CD8-positive, alpha-beta T cell (primary cell): ENCODE measurements at regions of chr9 and their contacts with region 1.

Region 1: GRCh38 chr9:133144137-133144903 is 19.4 kb downstream of the GBGT1 start:
- DNase-seq: peak; percentile 91 to 98 (median 95)
- ATAC-seq: peak; percentile 60
- H3K4me3 ChIP-seq: peak overlapping the region; percentile 41 to 49
- H3K4me3 Mint-ChIP-seq: peak overlapping the region; percentile 83
- H3K27ac ChIP-seq: peak overlapping the region; percentile 68 to 96
- H3K27ac Mint-ChIP-seq: peak overlapping the region; percentile 95
- H3K4me1 ChIP-seq: peaks cover 68% of the 10 kb centered on the region
- H3K4me1 Mint-ChIP-seq: peaks cover 70% of the 10 kb centered on the region
- H3K27me3 ChIP-seq: no peaks in the 10 kb centered on the region
- H3K27me3 Mint-ChIP-seq: no peaks in the 10 kb centered on the region
- CTCF ChIP-seq: peak; percentile 98

Region 2: DNA sequence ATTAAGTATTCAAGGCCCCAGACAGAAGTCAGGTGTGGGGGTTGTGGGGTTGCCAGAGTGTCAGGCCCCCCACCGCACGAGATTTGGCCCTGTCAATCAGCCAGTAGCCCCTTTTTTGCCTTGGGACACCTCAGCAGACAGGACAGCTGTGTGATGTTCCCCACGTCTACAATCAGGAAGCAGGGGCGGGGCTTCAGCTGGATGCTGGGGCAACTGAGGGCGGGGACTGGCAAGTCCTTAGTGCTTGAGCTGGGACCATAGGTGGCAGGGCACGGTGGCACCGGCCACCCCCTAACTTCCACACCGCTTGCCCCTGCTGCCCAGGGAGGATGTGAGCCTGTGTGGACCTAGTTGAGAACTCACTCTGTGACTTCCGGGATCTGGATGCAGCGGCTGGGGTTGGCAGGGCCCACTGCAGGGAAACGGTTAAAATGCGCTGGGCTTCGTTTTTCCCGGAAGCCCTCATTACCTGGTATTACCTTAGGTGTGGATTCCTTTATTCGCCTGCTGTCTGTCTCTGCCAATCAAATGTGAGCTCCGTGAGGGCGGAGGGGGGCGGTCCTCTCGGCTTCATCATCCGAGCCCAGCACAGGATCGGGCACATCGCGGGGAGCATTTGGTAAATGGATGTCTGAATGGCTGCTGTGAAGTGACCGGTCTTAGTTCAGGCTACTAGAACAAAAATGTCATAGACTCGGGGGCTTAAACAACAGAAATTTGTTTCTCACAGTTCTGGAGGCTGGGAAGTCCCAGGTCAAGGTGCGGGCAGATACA is 121.0 kb before region 1 on chr9:
- CTCF ChIA-PET with region 1: interaction called, 19 read pairs
- POLR2A ChIA-PET with region 1: interaction called, 5 read pairs
- intact Hi-C with region 1: loop called (anchors 1 kb)
- DNase-seq: peak in 5 of 9 experiments; percentile 19 to 53 (median 39)
- ATAC-seq: no peak
- H3K4me3 ChIP-seq: no peak overlapping the region
- H3K4me3 Mint-ChIP-seq: no peak overlapping the region
- H3K27ac ChIP-seq: no peak overlapping the region
- H3K27ac Mint-ChIP-seq: no peak overlapping the region
- H3K4me1 ChIP-seq: peaks cover 4% of the 10 kb centered on the region
- H3K4me1 Mint-ChIP-seq: peaks cover 13% of the 10 kb centered on the region
- H3K27me3 ChIP-seq: no peaks in the 10 kb centered on the region
- H3K27me3 Mint-ChIP-seq: no peaks in the 10 kb centered on the region
- CTCF ChIP-seq: no peak

Region 3: GRCh38 chr9:133042676-133043075 is 101.6 kb before region 1 on chr9:
- CTCF ChIA-PET with region 1: interaction called, 29 read pairs
- POLR2A ChIA-PET with region 1: no interaction called
- intact Hi-C with region 1: loop called in 1 of 2 experiments (anchors 2 kb)
- DNase-seq: no peak
- ATAC-seq: no peak
- H3K4me3 ChIP-seq: no peak overlapping the region
- H3K4me3 Mint-ChIP-seq: no peak overlapping the region
- H3K27ac ChIP-seq: no peak overlapping the region
- H3K27ac Mint-ChIP-seq: no peak overlapping the region
- H3K4me1 ChIP-seq: no peaks in the 10 kb centered on the region
- H3K4me1 Mint-ChIP-seq: peaks cover 12% of the 10 kb centered on the region
- H3K27me3 ChIP-seq: no peaks in the 10 kb centered on the region
- H3K27me3 Mint-ChIP-seq: no peaks in the 10 kb centered on the region
- CTCF ChIP-seq: no peak

Region 4: GRCh38 chr9:133103183-133103986 is 40.9 kb before region 1 on chr9:
- CTCF ChIA-PET with region 1: interaction called, 606 read pairs
- POLR2A ChIA-PET with region 1: interaction called, 18 read pairs
- intact Hi-C with region 1: loop called (anchors 1 kb)
- DNase-seq: peak; percentile 38 to 80 (median 59)
- ATAC-seq: peak; percentile 79
- H3K4me3 ChIP-seq: no peak overlapping the region
- H3K4me3 Mint-ChIP-seq: no peak overlapping the region
- H3K27ac ChIP-seq: peak overlapping the region in 1 of 2 experiments; percentile 50
- H3K27ac Mint-ChIP-seq: peak overlapping the region; percentile 33
- H3K4me1 ChIP-seq: no peaks in the 10 kb centered on the region
- H3K4me1 Mint-ChIP-seq: no peaks in the 10 kb centered on the region
- H3K27me3 ChIP-seq: no peaks in the 10 kb centered on the region
- H3K27me3 Mint-ChIP-seq: no peaks in the 10 kb centered on the region
- CTCF ChIP-seq: peak; percentile 83

Region 5: GRCh38 chr9:133133681-133134418 is 10.5 kb before region 1 on chr9:
- CTCF ChIA-PET with region 1: interaction called, 130 read pairs
- POLR2A ChIA-PET with region 1: interaction called, 41 read pairs
- intact Hi-C with region 1: loop called (anchors 1 kb)
- DNase-seq: peak; percentile 85 to 98 (median 92)
- ATAC-seq: peak; percentile 75
- H3K4me3 ChIP-seq: peak overlapping the region in 1 of 2 experiments; percentile 23
- H3K4me3 Mint-ChIP-seq: peak overlapping the region; percentile 72
- H3K27ac ChIP-seq: peak overlapping the region; percentile 92 to 100
- H3K27ac Mint-ChIP-seq: peak overlapping the region; percentile 99
- H3K4me1 ChIP-seq: peaks cover 67% of the 10 kb centered on the region
- H3K4me1 Mint-ChIP-seq: peaks cover 66% of the 10 kb centered on the region
- H3K27me3 ChIP-seq: no peaks in the 10 kb centered on the region
- H3K27me3 Mint-ChIP-seq: no peaks in the 10 kb centered on the region
- CTCF ChIP-seq: no peak

Region 6: GRCh38 chr9:133173056-133173455 is 28.7 kb after region 1 on chr9:
- CTCF ChIA-PET with region 1: no interaction called
- POLR2A ChIA-PET with region 1: no interaction called
- intact Hi-C with region 1: no loop called
- DNase-seq: no peak
- ATAC-seq: no peak
- H3K4me3 ChIP-seq: no peak overlapping the region
- H3K4me3 Mint-ChIP-seq: no peak overlapping the region
- H3K27ac ChIP-seq: no peak overlapping the region
- H3K27ac Mint-ChIP-seq: no peak overlapping the region
- H3K4me1 ChIP-seq: no peaks in the 10 kb centered on the region
- H3K4me1 Mint-ChIP-seq: no peaks in the 10 kb centered on the region
- H3K27me3 ChIP-seq: no peaks in the 10 kb centered on the region
- H3K27me3 Mint-ChIP-seq: no peaks in the 10 kb centered on the region
- CTCF ChIP-seq: no peak

Region 7: DNA sequence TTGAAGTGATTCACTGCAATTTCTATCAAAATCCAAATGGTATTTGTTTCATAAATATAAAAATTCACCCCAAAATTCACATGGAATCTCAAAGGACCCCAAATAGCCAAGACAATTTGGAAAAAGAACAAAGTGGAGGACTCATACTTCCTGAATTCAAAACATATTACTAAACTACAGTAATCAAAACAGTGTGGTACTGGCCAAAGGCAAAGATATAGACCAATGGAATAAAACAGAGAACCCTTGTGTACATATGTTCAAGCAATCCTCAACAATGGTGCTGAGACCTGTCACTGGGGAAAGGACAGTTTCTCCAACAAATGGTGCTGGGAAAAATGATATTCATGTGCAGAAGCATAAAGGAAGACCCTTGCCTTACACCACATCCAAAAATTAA is 50.7 kb after region 1 on chr9:
- CTCF ChIA-PET with region 1: no interaction called
- POLR2A ChIA-PET with region 1: no interaction called
- intact Hi-C with region 1: no loop called
- DNase-seq: no peak
- ATAC-seq: no peak
- H3K4me3 ChIP-seq: no peak overlapping the region
- H3K4me3 Mint-ChIP-seq: no peak overlapping the region
- H3K27ac ChIP-seq: no peak overlapping the region
- H3K27ac Mint-ChIP-seq: no peak overlapping the region
- H3K4me1 ChIP-seq: no peaks in the 10 kb centered on the region
- H3K4me1 Mint-ChIP-seq: peaks cover under 1% of the 10 kb centered on the region
- H3K27me3 ChIP-seq: peaks cover 0 to 5% of the 10 kb centered on the region in 2 experiments
- H3K27me3 Mint-ChIP-seq: peaks cover 33% of the 10 kb centered on the region
- CTCF ChIP-seq: no peak

Region 8: GRCh38 chr9:133252301-133252780 is 108.0 kb after region 1 on chr9:
- CTCF ChIA-PET with region 1: no interaction called
- POLR2A ChIA-PET with region 1: no interaction called
- intact Hi-C with region 1: no loop called
- DNase-seq: no peak
- ATAC-seq: no peak
- H3K4me3 ChIP-seq: no peak overlapping the region
- H3K4me3 Mint-ChIP-seq: no peak overlapping the region
- H3K27ac ChIP-seq: peak overlapping the region in 1 of 2 experiments; percentile 37
- H3K27ac Mint-ChIP-seq: no peak overlapping the region
- H3K4me1 ChIP-seq: no peaks in the 10 kb centered on the region
- H3K4me1 Mint-ChIP-seq: no peaks in the 10 kb centered on the region
- H3K27me3 ChIP-seq: peaks cover 0 to 3% of the 10 kb centered on the region in 2 experiments
- H3K27me3 Mint-ChIP-seq: peaks cover 16% of the 10 kb centered on the region
- CTCF ChIP-seq: no peak